ENCODE measurements at regions of chr12 and their contacts with region 1.

Region 1: GRCh38 chr12:8078398-8078797 is 3.7 kb upstream of the NECAP1 start:
- DNase-seq: peak; percentile 78
- ATAC-seq: peak; percentile 30
- H3K4me3 Mint-ChIP-seq: peak overlapping the region; percentile 10
- H3K27ac Mint-ChIP-seq: peak overlapping the region; percentile 57
- H3K4me1 Mint-ChIP-seq: peaks cover 38% of the 10 kb centered on the region
- H3K27me3 Mint-ChIP-seq: no peaks in the 10 kb centered on the region

Region 2: DNA sequence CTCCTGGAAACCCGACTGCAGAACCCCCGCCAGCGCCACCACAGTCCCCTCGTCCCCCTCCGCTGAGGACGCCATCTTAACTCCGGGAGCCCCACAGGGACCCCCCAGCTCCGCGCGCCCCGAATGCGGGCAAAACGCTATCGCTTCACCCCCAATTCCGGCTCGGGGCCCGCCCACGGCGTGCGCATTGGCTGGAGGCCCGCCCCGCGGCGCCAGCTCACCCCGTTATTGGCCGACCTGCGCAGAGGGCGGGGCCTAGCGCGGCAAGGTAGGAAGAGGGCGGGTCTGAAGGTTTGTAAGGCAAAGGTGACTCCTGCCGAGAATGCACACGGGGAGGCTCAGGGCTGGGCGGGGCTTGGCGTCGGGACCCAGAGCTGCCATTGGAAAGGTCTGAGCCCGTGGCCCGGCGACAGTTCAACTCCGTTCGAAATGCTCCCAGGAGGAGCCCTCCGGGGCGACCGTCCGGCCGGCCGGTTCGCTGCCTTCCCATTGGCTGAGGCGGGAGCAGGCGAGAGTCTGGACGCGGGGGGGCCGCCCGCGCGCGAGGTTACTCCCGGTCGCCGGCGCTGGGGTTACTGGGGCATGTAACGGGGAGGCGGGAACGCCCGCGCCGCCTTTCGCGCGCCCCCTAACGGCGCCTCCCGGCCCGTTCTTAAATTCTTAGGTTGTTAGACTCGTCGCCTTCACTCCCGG is 1059.9 kb before region 1 on chr12 and contains the start of gene LPCAT3:
- CTCF ChIA-PET with region 1: no interaction called
- POLR2A ChIA-PET with region 1: no interaction called
- intact Hi-C with region 1: loop called in 1 of 2 experiments (anchors 5 kb)
- DNase-seq: peak; percentile 98
- ATAC-seq: peak; percentile 98
- H3K4me3 Mint-ChIP-seq: peak within 1 kb of the TSS; percentile 83
- H3K27ac Mint-ChIP-seq: peak within 1 kb of the TSS; percentile 80
- H3K4me1 Mint-ChIP-seq: peaks cover 29% of the 10 kb centered on the region
- H3K27me3 Mint-ChIP-seq: no peaks in the 10 kb centered on the region
- total RNA-seq, gene LPCAT3: 20.8 to 28.0 TPM

Region 3: DNA sequence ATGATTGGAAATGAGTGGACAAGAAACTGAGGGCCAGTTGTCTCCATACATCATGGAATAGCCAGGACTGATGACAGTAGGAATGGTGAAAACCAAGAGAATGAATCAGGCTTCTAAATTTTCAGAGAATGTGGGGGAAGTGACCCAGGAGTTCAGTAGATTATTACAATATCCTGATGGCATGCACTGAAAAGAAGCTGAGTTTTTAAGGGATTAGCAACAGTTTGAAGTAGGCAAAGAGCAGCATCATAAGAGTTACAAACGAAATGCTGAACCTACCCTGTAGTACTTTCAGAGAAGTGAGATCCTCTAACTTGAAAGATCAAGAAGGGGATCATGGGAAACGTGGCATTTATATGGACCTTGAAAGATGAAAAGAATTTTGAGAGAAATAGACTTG is 218.8 kb before region 1 on chr12:
- CTCF ChIA-PET with region 1: interaction called, 11 read pairs
- POLR2A ChIA-PET with region 1: no interaction called
- intact Hi-C with region 1: loop called (anchors 1 to 5 kb)
- DNase-seq: no peak
- ATAC-seq: no peak
- H3K4me3 Mint-ChIP-seq: no peak overlapping the region
- H3K27ac Mint-ChIP-seq: no peak overlapping the region
- H3K4me1 Mint-ChIP-seq: peaks cover 16% of the 10 kb centered on the region
- H3K27me3 Mint-ChIP-seq: no peaks in the 10 kb centered on the region

Region 4: DNA sequence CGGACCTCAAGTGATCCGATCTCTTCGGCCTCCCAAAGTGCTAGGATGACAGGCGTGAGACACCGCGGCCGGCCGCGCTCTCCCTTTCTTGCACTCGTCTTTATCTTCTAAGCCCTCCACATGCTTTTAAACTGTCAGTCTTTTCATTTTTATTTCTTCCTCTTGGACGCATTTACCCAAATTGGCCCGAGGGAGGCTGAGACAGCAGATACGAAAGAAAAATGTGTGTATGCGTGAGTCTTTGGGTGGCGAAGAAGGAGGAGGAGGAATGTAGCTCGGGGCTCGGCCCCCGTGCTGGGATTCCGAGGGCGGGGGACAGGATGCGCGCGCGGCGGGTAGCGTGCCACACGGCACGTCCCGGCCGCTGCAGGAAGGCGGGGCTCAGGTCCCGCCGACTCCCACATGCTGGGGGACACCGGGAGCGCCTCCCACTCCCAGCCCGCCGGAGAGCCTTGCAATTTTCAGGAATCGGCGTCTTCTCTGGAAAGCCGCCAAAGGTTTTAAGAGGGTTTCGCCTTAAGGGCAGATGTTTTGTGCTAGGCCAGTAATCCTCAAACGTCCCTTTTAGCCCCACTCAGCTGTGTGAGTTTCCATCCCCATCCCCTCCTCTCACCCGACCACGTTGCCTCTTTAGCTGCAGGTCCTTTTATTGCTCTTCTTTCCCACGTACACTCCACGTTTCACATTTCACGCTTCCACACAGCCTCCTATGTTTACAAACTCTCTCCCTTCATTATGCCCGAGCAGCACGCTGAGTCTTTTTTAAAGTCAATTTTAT is 107.7 kb before region 1 on chr12:
- CTCF ChIA-PET with region 1: interaction called, 3 read pairs
- POLR2A ChIA-PET with region 1: interaction called, 4 read pairs
- intact Hi-C with region 1: loop called in 1 of 2 experiments (anchors 1 kb)
- DNase-seq: peak; percentile 94
- ATAC-seq: peak; percentile 81
- H3K4me3 Mint-ChIP-seq: peak overlapping the region; percentile 80
- H3K27ac Mint-ChIP-seq: peak overlapping the region; percentile 99
- H3K4me1 Mint-ChIP-seq: peaks cover 31% of the 10 kb centered on the region
- H3K27me3 Mint-ChIP-seq: no peaks in the 10 kb centered on the region

Region 5: GRCh38 chr12:8032242-8033152 is 45.9 kb before region 1 on chr12 and contains the start of gene FOXJ2:
- CTCF ChIA-PET with region 1: interaction called, 20 read pairs
- POLR2A ChIA-PET with region 1: interaction called, 4 read pairs
- intact Hi-C with region 1: loop called in 1 of 2 experiments (anchors 1 kb)
- DNase-seq: peak; percentile 88
- ATAC-seq: peak; percentile 88
- H3K4me3 Mint-ChIP-seq: peak within 1 kb of the TSS; percentile 84
- H3K27ac Mint-ChIP-seq: peak within 1 kb of the TSS; percentile 88
- H3K4me1 Mint-ChIP-seq: peaks cover 53% of the 10 kb centered on the region
- H3K27me3 Mint-ChIP-seq: no peaks in the 10 kb centered on the region
- total RNA-seq, gene FOXJ2: 14.8 to 16.5 TPM

Region 6: GRCh38 chr12:8065991-8066594 is 12.3 kb before region 1 on chr12 and contains the start of gene C3AR1:
- CTCF ChIA-PET with region 1: interaction called, 16 read pairs
- POLR2A ChIA-PET with region 1: interaction called, 3 read pairs
- intact Hi-C with region 1: loop called (anchors 1 kb)
- DNase-seq: peak; percentile 48
- ATAC-seq: peak; percentile 98
- H3K4me3 Mint-ChIP-seq: peak within 1 kb of the TSS; percentile 43
- H3K27ac Mint-ChIP-seq: peak within 1 kb of the TSS; percentile 76
- H3K4me1 Mint-ChIP-seq: peaks cover 29% of the 10 kb centered on the region
- H3K27me3 Mint-ChIP-seq: no peaks in the 10 kb centered on the region
- total RNA-seq, gene C3AR1: 0.33 to 0.57 TPM

Region 7: DNA sequence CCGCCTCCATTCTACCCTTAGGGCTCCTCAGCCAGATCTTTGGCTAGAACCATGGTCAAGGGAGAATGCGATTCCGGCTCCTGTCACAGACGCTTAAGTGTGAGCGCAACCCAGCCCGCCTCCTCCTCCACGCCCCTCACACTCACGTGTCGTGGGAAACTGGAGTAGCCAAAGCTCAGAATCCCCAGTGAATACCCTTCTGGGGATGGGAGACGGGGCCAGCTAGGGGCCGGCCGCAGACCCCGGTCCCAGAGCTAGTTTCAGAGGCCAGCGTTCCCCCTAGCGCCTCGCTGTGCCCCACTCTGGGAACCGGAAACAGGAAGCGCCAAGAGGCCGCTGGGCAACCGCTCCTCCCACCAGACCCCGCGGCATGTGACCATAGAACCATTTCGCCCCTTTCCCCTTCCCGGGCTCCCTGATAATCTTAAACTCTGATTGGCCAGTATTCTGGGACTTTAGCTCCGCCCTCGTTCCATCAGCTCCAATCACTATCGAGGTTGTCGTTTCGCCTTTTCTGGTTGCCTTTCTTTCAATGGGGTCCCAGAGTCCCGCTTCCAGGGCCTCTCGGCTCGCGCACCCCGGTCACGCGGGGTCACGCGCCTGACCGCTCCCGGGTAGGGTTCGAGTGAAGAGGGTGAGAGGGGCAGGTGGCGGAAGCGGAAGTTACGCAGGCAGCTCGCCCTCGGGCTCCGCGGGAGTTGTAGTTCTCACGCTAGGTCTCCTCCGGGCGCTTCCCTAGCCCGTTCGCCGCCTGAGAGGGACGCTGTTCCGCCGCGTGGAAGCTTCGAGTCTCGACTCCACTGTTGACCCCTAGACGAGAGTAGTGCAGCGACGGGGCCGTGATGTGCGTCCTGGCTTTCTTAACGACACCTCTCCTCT is 871.2 kb after region 1 on chr12 and contains the start of gene M6PR:
- CTCF ChIA-PET with region 1: no interaction called
- POLR2A ChIA-PET with region 1: no interaction called
- intact Hi-C with region 1: loop called in 1 of 2 experiments (anchors 5 kb)
- DNase-seq: peak; percentile 96
- ATAC-seq: peak; percentile 85
- H3K4me3 Mint-ChIP-seq: peak within 1 kb of the TSS; percentile 89
- H3K27ac Mint-ChIP-seq: peak within 1 kb of the TSS; percentile 97
- H3K4me1 Mint-ChIP-seq: peaks cover 57% of the 10 kb centered on the region
- H3K27me3 Mint-ChIP-seq: no peaks in the 10 kb centered on the region
- total RNA-seq, gene M6PR: 146 to 179 TPM

Measured in activated CD4-positive, alpha-beta T cell treated with anti-CD3 and anti-CD28 coated beads for 36 hours (primary cell).